Transverse colon (tissue), 4 donors: ENCODE measurements at regions of chr1 and their contacts with region 1.

Region 1: DNA sequence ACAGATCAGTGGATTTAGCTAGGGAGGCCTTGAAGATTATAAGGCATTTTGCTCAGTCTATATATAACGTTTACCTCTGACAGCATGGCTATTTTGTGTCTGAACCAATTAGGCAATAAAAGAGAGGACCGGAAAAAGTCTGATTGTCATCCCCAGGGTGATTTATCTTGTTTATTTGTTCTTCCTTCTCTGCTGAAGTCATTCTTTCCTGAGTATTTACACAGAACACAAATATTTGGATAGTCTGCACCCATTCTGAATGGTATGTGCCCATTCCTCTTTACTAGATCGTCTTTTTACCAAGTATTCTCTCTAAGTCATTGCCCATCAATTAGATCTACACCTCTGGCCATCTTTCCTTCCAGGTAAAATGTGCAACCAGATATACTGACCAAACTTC is 1602.9 kb downstream of the KCNT2 start:
- DNase-seq: no peak
- H3K4me3 ChIP-seq: no peak overlapping the region
- H3K27ac ChIP-seq: no peak overlapping the region
- H3K4me1 ChIP-seq: no peaks in the 10 kb centered on the region
- H3K27me3 ChIP-seq: no peaks in the 10 kb centered on the region
- CTCF ChIP-seq: no peak
- EP300 ChIP-seq: no peak
- POLR2A ChIP-seq: no peak

Region 2: GRCh38 chr1:194734970-194735369 is 270.4 kb before region 1 on chr1:
- in situ Hi-C with region 1: no loop called
- intact Hi-C with region 1: no loop called
- DNase-seq: no peak
- H3K4me3 ChIP-seq: no peak overlapping the region
- H3K27ac ChIP-seq: no peak overlapping the region
- H3K4me1 ChIP-seq: no peaks in the 10 kb centered on the region
- H3K27me3 ChIP-seq: no peaks in the 10 kb centered on the region
- CTCF ChIP-seq: no peak
- EP300 ChIP-seq: no peak
- POLR2A ChIP-seq: no peak

Region 3: GRCh38 chr1:194990483-194990882 is 14.9 kb before region 1 on chr1:
- in situ Hi-C with region 1: no loop called
- intact Hi-C with region 1: loop called (anchors 1 kb)
- DNase-seq: no peak
- H3K4me3 ChIP-seq: no peak overlapping the region
- H3K27ac ChIP-seq: no peak overlapping the region
- H3K4me1 ChIP-seq: no peaks in the 10 kb centered on the region
- H3K27me3 ChIP-seq: no peaks in the 10 kb centered on the region
- CTCF ChIP-seq: no peak
- EP300 ChIP-seq: no peak
- POLR2A ChIP-seq: no peak